Mammary epithelial cell (primary cell): ENCODE measurements at regions of chr18 and their contacts with region 1.

Region 1: DNA sequence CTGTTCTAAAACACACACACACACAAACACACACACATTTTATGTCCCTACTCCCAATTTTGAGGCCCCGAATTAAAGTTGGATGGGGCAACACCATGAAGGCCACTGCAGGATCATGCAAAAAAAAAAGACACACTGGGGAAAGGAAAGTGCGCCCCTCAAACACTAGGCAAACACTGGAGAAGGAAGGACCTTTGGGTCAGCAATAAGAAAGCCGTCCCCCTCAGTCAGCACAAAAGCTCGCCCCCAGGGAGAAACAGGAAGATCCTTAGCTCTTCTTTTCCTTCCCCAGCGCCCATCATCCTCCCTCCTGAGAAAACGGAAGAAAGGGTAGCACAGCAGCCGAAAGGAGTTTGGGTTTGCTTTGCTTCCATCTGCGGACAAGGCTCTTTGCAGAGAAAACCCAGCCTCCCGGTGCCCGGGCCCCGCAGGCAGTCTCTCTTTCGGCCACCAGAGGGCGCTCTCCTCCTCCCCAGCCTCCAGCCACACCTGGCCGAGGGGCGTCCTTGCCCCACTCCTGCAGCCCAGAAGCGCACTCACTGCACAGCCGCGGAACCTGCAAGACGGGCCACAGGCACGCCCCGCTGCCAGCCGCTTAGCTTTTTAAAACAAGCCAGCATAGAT is 248.5 kb downstream of the CDH20 start:
- DNase-seq: peak; percentile 59
- H3K4me3 ChIP-seq: peak overlapping the region; percentile 44 to 56 (median 50)
- H3K27ac ChIP-seq: no peak overlapping the region
- H3K4me1 ChIP-seq: peaks cover 10% of the 10 kb centered on the region
- H3K27me3 ChIP-seq: no peaks in the 10 kb centered on the region
- CTCF ChIP-seq: peak; percentile 85 to 98

Region 2: DNA sequence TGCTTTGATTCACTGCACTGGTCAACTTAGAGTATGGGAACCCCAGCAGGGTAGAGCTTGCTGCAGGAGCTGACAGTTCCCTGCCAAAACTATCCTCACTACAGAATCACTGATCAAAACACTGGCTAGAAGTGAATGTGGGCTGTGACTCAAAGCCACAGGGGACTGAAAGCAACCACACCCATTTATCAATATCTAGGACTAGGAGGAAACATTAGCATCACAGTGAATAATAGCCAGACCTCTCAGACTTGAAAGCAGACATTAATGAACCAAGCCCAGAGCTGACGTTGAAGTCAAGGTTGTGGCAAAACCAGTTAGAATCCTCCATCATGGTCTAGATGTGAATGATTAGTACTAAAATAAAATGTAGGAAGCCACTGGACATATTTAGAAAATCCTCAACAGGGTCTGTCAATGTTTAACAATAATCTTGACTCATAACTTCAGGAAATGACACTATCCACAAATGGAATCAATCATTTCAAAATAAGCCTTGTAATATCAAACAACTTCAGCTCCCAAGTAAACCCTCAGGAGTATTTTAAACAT is 117.1 kb before region 1 on chr18:
- CTCF ChIA-PET with region 1: no interaction called
- dilution Hi-C with region 1: no loop called
- in situ Hi-C with region 1: no loop called
- intact Hi-C with region 1: no loop called
- DNase-seq: no peak
- H3K4me3 ChIP-seq: no peak overlapping the region
- H3K27ac ChIP-seq: no peak overlapping the region
- H3K4me1 ChIP-seq: no peaks in the 10 kb centered on the region
- H3K27me3 ChIP-seq: no peaks in the 10 kb centered on the region
- CTCF ChIP-seq: no peak

Region 3: GRCh38 chr18:61551586-61551985 is 30.1 kb before region 1 on chr18:
- CTCF ChIA-PET with region 1: no interaction called
- dilution Hi-C with region 1: no loop called
- in situ Hi-C with region 1: no loop called
- intact Hi-C with region 1: loop called (anchors 1 kb)
- DNase-seq: peak; percentile 68
- H3K4me3 ChIP-seq: no peak overlapping the region
- H3K27ac ChIP-seq: no peak overlapping the region
- H3K4me1 ChIP-seq: peaks cover 4% of the 10 kb centered on the region
- H3K27me3 ChIP-seq: no peaks in the 10 kb centered on the region
- CTCF ChIP-seq: peak; percentile 82 to 95

Region 4: GRCh38 chr18:62037989-62038778 is 456.5 kb after region 1 on chr18:
- CTCF ChIA-PET with region 1: no interaction called
- dilution Hi-C with region 1: no loop called
- in situ Hi-C with region 1: no loop called
- intact Hi-C with region 1: no loop called
- DNase-seq: no peak
- H3K4me3 ChIP-seq: no peak overlapping the region
- H3K27ac ChIP-seq: no peak overlapping the region
- H3K4me1 ChIP-seq: no peaks in the 10 kb centered on the region
- H3K27me3 ChIP-seq: no peaks in the 10 kb centered on the region
- CTCF ChIP-seq: no peak